Right cardiac atrium (tissue), 5 donors: ENCODE measurements at regions of chr16 and their contacts with region 1.

Region 1: DNA sequence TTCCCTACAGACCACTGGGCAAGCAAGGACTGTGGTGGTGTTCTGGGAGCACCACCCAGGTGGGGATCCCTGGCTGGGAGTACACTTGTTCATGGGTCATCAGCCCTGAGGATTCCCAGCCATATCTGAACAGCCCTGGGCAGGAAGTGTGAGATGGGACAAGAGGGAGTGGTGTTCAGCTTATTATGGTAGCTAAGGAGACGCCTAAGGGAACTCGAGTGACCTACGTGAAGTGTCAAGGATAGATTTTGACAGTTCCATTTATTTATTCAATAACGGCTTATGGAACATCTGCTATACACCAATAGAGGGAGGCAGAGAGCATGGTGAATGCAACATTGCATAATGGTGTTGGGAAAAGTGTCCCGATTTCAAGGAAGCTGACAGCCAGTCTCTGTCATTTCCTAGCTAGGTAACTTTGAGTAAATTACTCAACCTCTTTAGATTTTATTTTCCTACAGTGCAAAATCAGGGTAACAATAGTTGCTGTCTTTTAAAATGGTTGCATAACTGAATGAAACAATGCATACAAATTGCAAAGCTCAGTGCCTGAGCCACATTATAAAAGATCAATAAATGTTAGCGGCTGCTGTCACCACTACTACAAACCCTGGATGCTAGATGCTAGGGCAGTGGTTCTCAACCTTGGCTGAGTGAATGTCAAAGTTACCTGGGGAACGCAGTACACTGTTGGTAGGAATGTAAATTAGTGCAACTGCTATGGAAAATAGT is 534.1 kb downstream of the GRIN2A start:
- DNase-seq: no peak
- ATAC-seq: peak; percentile 80 to 85
- H3K4me3 ChIP-seq: no peak overlapping the region
- H3K27ac ChIP-seq: no peak overlapping the region
- H3K4me1 ChIP-seq: peaks cover 3% of the 10 kb centered on the region
- H3K27me3 ChIP-seq: no peaks in the 10 kb centered on the region

Region 2: GRCh38 chr16:10039220-10040096 is 391.3 kb after region 1 on chr16:
- intact Hi-C with region 1: loop called in 1 of 4 experiments (anchors 10 kb)
- DNase-seq: peak in 2 of 3 donors; percentile 57 to 66
- ATAC-seq: peak; percentile 67 to 76
- H3K4me3 ChIP-seq: peak overlapping the region; percentile 1
- H3K27ac ChIP-seq: no peak overlapping the region
- H3K4me1 ChIP-seq: no peaks in the 10 kb centered on the region
- H3K27me3 ChIP-seq: no peaks in the 10 kb centered on the region